BJ (cell line): ENCODE measurements at regions of chr15 and their contacts with region 1.

Region 1: GRCh38 chr15:100918034-100918689 is 995 bp upstream of the LRRK1 start:
- DNase-seq: no peak
- H3K4me3 ChIP-seq: peak overlapping the region; percentile 66
- H3K27me3 ChIP-seq: no peaks in the 10 kb centered on the region
- CTCF ChIP-seq: peak; percentile 73

Region 2: GRCh38 chr15:100627789-100628395 is 290.3 kb before region 1 on chr15:
- CTCF ChIA-PET with region 1: interaction called, 11 read pairs
- POLR2A ChIA-PET with region 1: no interaction called
- DNase-seq: peak; percentile 57
- H3K4me3 ChIP-seq: no peak overlapping the region
- H3K27me3 ChIP-seq: no peaks in the 10 kb centered on the region
- CTCF ChIP-seq: peak; percentile 70

Region 3: DNA sequence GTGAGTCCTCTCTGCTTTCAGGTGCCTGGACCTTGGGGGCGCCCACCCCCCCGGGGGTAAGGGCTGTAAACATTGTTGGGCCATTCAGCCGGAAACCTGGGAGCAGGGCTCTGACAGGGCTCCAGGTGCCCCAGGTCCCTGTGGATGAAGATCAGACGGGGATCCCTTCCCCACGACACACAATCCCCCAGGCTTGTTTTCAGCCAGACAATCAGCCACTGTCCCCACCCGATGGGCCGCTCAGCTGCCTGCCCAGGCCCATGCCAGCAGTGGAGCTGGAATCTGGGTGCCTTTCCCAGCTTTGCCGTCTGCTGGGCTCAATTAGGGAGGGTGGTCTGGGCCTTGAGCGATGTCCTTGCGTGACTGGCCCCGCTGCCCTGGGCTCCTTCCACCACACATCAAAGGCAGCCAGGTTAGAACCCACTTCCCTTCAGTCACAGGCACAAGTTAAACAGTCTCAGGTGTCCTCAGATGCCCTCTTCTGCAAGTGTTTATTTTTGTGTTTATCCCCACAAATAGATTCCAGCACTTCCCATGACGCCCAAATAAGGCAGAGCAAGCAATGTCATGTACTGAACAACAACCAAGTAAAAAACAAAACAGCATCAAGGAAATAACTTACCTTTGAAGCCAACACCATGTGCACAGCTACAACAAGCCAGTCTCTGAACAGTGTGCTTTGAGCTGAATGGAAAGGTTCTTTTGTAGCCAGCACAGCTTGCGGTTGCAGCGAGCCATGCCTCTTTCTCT is 115.6 kb before region 1 on chr15:
- CTCF ChIA-PET with region 1: no interaction called
- POLR2A ChIA-PET with region 1: no interaction called
- DNase-seq: no peak
- H3K4me3 ChIP-seq: no peak overlapping the region
- H3K27me3 ChIP-seq: peaks cover 2% of the 10 kb centered on the region; the same call in 1 of the 2 replicates
- CTCF ChIP-seq: no peak

Region 4: DNA sequence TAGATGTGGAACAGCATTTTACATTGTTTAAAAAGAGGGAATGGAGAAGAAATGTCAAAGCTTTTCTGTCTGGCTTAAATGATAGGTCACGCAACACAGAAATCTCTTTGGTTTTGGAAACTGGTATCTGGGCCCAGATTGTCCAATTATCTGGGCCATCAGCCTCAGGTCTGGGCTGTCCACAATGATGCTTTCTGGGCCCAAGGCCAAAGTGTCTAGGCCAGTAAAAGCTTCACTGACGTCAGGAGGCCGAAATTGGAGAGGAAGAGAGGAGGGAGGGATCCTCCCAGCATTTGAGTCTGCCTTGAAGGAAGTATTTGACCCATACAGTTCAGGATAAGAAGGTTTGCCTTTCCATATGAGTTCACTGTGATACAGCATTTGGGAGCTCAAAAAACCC is 99.2 kb before region 1 on chr15:
- CTCF ChIA-PET with region 1: no interaction called
- POLR2A ChIA-PET with region 1: no interaction called
- DNase-seq: peak; percentile 26
- H3K4me3 ChIP-seq: no peak overlapping the region
- H3K27me3 ChIP-seq: peaks cover 7% of the 10 kb centered on the region
- CTCF ChIP-seq: no peak

Region 5: DNA sequence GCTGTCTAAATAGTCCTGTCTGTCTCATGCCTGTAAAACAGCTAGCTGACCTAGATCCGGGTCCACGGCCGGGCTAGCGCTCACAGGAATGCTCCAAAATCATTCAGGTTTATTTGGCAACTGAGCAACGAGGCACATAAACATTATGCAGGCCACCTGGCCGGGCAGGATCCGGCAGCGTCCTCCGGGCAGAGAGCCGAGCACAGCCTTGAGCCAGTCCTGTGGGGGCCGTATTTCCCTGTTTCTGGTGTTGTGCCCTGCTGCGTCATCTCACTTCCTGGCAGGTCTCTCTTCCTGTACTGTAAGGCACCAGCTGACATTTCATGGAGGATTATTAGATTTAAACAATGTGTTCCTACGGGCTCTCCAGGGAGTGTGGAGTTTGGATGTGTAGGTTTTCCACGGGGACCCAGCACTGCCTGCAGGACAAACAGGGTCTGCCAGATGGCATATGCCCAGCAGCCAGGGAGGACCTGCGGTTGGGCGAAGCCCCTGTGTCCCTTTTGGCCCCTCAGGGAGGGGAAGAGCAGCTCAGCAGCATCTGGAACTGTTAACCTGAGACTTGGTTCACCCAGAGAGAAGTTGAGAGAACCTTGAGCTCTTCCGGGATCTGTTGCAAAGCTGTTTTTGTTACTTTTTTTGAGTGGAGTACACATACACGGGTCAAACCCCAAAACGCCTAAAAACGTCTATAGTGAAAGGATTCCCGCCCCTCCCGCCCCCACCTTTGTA is 15.6 kb before region 1 on chr15:
- CTCF ChIA-PET with region 1: interaction called, 33 read pairs
- POLR2A ChIA-PET with region 1: no interaction called
- DNase-seq: peak; percentile 52
- H3K4me3 ChIP-seq: 0 out of 2 replicates have a peak overlapping the region, but pooled peaks have one; percentile 13
- H3K27me3 ChIP-seq: no peaks in the 10 kb centered on the region
- CTCF ChIP-seq: no peak

Region 6: GRCh38 chr15:100941536-100941935 is 23.4 kb after region 1 on chr15:
- CTCF ChIA-PET with region 1: interaction called, 11 read pairs
- POLR2A ChIA-PET with region 1: no interaction called
- DNase-seq: no peak
- H3K4me3 ChIP-seq: no peak overlapping the region
- H3K27me3 ChIP-seq: no peaks in the 10 kb centered on the region
- CTCF ChIP-seq: no peak

Region 7: GRCh38 chr15:100973351-100974111 is 55.4 kb after region 1 on chr15:
- CTCF ChIA-PET with region 1: interaction called, 13 read pairs
- POLR2A ChIA-PET with region 1: no interaction called
- DNase-seq: no peak
- H3K4me3 ChIP-seq: no peak overlapping the region
- H3K27me3 ChIP-seq: no peaks in the 10 kb centered on the region
- CTCF ChIP-seq: no peak